GM10248 (cell line): ENCODE measurements at regions of chr10 and their contacts with region 1.

Region 1: GRCh38 chr10:34612446-34612845 is 202.7 kb downstream of the PARD3 start:
- DNase-seq: no peak
- CTCF ChIP-seq: no peak

Region 2: DNA sequence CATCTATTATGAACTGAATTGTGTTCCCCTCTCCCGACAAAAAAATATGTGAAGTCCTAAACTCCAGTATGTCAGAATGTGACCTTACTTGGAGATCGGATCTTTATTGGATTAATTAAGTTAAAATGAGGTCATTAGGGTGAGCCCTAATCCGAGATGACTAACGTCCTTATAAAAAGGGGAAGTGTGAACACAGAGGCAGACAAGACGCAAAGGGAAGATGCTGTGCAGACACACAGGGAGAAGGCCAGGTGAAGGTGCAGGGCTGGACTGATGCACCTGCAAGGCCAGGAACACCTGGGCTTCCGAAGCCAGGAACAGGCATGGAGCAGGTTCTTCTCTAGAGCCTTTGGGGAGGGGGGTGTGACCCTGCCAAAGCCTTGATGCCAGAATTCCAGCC is 14.9 kb after region 1 on chr10:
- CTCF ChIA-PET with region 1: interaction called, 13 read pairs
- POLR2A ChIA-PET with region 1: no interaction called
- DNase-seq: peak; percentile 32
- CTCF ChIP-seq: no peak

Region 3: GRCh38 chr10:34710391-34710751 is 97.9 kb after region 1 on chr10:
- CTCF ChIA-PET with region 1: no interaction called
- POLR2A ChIA-PET with region 1: no interaction called
- DNase-seq: no peak
- CTCF ChIP-seq: no peak